ENCODE measurements at regions of chr13 and their contacts with region 1.

Region 1: GRCh38 chr13:95834134-95834765 is 157.3 kb downstream of the DNAJC3 start:
- DNase-seq: peak; percentile 69
- H3K4me3 ChIP-seq: no peak overlapping the region; a peak in 1 of 4 replicates
- H3K27ac ChIP-seq: no peak overlapping the region
- H3K4me1 ChIP-seq: peaks cover 2 to 5% of the 10 kb centered on the region in 2 experiments; a peak in 2 of 4 replicates
- H3K27me3 ChIP-seq: no peaks in the 10 kb centered on the region
- CTCF ChIP-seq: peak; percentile 95
- EP300 ChIP-seq: peak in 1 of 2 experiments; percentile 42; a peak in 1 of 4 replicates
- RAD21 ChIP-seq: peak; percentile 98

Region 2: GRCh38 chr13:95536632-95537241 is 297.5 kb before region 1 on chr13:
- CTCF ChIA-PET with region 1: interaction called, 48 read pairs
- POLR2A ChIA-PET with region 1: no interaction called
- DNase-seq: no peak
- H3K4me3 ChIP-seq: no peak overlapping the region
- H3K27ac ChIP-seq: no peak overlapping the region
- H3K4me1 ChIP-seq: peaks cover 0 to 4% of the 10 kb centered on the region in 2 experiments; a peak in 2 of 4 replicates
- H3K27me3 ChIP-seq: no peaks in the 10 kb centered on the region
- CTCF ChIP-seq: peak; percentile 72
- EP300 ChIP-seq: no peak
- RAD21 ChIP-seq: peak; percentile 64

Region 3: GRCh38 chr13:95585869-95586268 is 248.4 kb before region 1 on chr13:
- CTCF ChIA-PET with region 1: no interaction called
- POLR2A ChIA-PET with region 1: no interaction called
- DNase-seq: no peak
- H3K4me3 ChIP-seq: no peak overlapping the region
- H3K27ac ChIP-seq: no peak overlapping the region
- H3K4me1 ChIP-seq: no peaks in the 10 kb centered on the region
- H3K27me3 ChIP-seq: no peaks in the 10 kb centered on the region
- CTCF ChIP-seq: no peak
- EP300 ChIP-seq: no peak
- RAD21 ChIP-seq: no peak

Region 4: DNA sequence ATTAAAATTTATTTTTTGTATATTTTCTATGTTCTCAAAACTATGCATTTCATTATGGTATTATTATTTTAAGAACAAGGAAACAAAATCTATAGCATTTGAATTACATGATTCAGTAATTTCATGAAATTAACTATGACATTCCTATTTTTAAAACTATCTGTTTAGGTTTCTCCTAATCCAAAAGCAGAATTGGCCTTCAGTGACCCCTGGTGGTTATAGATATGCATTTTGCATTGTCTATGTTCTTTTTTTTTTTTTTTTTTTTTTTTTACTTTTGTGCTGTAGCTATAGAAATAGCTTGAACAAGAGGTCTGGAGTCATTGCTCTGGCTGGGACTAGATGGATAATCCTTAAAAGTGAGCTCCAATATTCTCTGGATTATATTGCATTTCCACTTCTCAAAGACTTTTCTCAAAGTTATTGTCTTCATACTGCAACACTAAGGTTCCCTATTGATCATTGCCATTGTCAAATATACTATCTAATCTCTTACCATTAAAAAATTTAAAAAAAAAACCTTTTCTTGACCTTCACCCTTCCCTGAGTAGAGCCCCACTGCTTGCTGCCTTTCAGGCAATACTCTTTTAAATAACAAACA is 173.2 kb before region 1 on chr13:
- CTCF ChIA-PET with region 1: interaction called, 14 read pairs
- POLR2A ChIA-PET with region 1: no interaction called
- DNase-seq: peak; percentile 39
- H3K4me3 ChIP-seq: no peak overlapping the region
- H3K27ac ChIP-seq: no peak overlapping the region
- H3K4me1 ChIP-seq: no peaks in the 10 kb centered on the region
- H3K27me3 ChIP-seq: no peaks in the 10 kb centered on the region
- CTCF ChIP-seq: peak; percentile 80
- EP300 ChIP-seq: no peak
- RAD21 ChIP-seq: peak; percentile 82

Region 5: GRCh38 chr13:95813139-95813538 is 21.1 kb before region 1 on chr13:
- CTCF ChIA-PET with region 1: interaction called, 11 read pairs
- POLR2A ChIA-PET with region 1: no interaction called
- DNase-seq: no peak
- H3K4me3 ChIP-seq: no peak overlapping the region
- H3K27ac ChIP-seq: no peak overlapping the region
- H3K4me1 ChIP-seq: no peaks in the 10 kb centered on the region
- H3K27me3 ChIP-seq: no peaks in the 10 kb centered on the region
- CTCF ChIP-seq: no peak
- EP300 ChIP-seq: no peak
- RAD21 ChIP-seq: no peak

Measured in SK-N-SH (cell line).